Panc1 (cell line): ENCODE measurements at regions of chr14 and their contacts with region 1.

Region 1: GRCh38 chr14:51293149-51293911 is 53.3 kb downstream of the TMX1 start:
- DNase-seq: no peak
- ATAC-seq: no peak
- H3K4me3 ChIP-seq: no peak overlapping the region
- H3K27ac ChIP-seq: no peak overlapping the region
- H3K4me1 ChIP-seq: no peaks in the 10 kb centered on the region
- H3K27me3 ChIP-seq: no peaks in the 10 kb centered on the region
- CTCF ChIP-seq: no peak

Region 2: GRCh38 chr14:51147183-51147582 is 146.1 kb before region 1 on chr14:
- CTCF ChIA-PET with region 1: no interaction called
- POLR2A ChIA-PET with region 1: no interaction called
- in situ Hi-C with region 1: no loop called
- intact Hi-C with region 1: no loop called
- DNase-seq: no peak
- ATAC-seq: no peak
- H3K4me3 ChIP-seq: no peak overlapping the region
- H3K27ac ChIP-seq: no peak overlapping the region
- H3K4me1 ChIP-seq: no peaks in the 10 kb centered on the region
- H3K27me3 ChIP-seq: no peaks in the 10 kb centered on the region
- CTCF ChIP-seq: no peak

Region 3: DNA sequence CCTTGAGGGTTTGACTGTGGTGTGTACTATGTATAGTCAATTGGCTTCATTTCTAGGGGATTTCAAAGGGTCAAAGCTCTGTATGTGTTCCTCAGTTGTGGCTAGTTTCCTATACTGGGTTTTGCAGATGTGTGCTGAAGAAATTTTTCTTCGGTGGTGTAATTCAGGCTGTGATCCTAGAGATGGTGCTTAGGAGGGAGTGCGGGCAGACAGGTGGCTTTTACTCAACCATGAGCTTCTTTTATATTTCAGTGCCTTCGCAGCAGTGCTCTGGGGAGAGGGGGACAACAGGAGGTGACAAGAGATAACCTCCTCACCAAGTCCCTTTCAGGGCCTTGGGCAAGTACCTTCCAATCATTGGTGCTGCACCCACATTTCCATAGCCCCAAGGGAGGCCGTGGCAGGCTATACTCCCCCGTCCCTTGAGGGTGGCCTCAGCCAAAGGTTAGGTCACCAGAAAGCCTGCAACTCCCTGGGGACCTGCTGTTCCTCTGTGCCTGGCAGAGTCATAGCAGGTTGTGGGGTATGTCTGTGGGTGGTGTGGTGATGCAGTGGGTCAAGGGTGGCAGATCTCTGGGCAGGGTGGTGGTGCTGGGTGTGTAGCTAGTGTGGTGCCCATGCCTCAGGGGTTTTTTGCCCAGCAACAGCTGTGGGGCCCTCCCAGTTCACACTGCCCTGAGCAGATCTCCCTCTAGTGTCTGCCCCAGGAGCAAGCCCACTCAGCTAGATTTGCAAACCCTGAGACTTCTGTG is 90.2 kb before region 1 on chr14:
- CTCF ChIA-PET with region 1: no interaction called
- POLR2A ChIA-PET with region 1: no interaction called
- in situ Hi-C with region 1: no loop called
- intact Hi-C with region 1: no loop called
- DNase-seq: no peak
- ATAC-seq: no peak
- H3K4me3 ChIP-seq: no peak overlapping the region
- H3K27ac ChIP-seq: no peak overlapping the region
- H3K4me1 ChIP-seq: no peaks in the 10 kb centered on the region
- H3K27me3 ChIP-seq: peaks cover 2% of the 10 kb centered on the region; the same call in 1 of the 2 replicates
- CTCF ChIP-seq: no peak

Region 4: DNA sequence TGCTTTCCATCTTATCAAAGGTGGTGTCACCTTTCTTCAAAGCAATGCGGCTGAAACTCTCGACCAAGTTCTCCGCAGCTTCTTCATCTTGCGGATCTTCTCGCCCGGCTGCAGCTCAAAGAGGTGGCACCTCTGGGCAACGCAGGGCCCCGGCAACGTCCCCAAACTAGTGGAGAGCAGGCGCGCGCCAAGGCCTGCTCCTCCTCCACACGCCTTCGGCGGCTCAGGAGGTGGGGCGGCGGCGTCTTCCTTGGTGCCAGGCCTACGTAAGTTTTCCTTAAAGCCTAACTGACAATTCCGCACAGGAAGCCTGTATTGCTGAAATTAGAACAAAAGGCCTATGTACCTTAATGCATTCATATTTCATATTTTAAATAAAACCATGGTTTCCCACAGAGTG is 58.7 kb after region 1 on chr14:
- CTCF ChIA-PET with region 1: no interaction called
- POLR2A ChIA-PET with region 1: no interaction called
- in situ Hi-C with region 1: no loop called
- intact Hi-C with region 1: no loop called
- DNase-seq: no peak
- ATAC-seq: no peak
- H3K4me3 ChIP-seq: no peak overlapping the region
- H3K27ac ChIP-seq: no peak overlapping the region
- H3K4me1 ChIP-seq: no peaks in the 10 kb centered on the region
- H3K27me3 ChIP-seq: no peaks in the 10 kb centered on the region
- CTCF ChIP-seq: no peak

Region 5: DNA sequence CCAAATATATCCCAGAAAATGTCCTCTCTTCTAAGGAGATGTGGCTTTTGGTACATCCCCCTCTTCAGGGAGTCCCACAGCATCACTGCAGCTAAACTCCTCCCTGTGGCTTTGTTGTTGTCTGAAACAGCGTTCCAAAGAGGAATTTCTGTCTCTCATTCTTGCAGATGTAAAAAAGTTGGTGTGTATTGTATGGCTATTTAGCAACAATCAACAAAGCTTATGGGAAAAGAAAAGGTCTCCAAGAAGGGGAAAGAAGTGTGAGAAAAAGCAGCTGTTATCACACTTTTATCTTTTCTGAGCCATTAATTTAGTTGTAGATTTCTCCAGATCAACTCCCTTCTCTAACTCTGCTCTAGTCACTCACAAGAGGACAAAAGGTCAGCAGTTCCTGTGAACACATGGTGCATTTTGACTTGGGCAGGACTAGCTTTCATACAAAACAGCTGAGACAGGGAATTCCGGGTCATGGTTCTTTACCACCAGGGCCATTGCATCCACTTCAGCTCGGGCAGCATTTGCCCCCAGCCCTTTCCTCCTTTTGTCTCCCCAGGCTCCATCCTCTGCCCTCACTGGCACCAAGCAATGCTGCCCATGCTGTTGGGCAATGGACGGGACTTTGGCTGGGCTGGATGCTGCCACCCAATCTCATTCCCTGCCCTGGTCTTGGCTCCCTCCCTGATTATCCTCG is 131.4 kb after region 1 on chr14:
- CTCF ChIA-PET with region 1: no interaction called
- POLR2A ChIA-PET with region 1: no interaction called
- in situ Hi-C with region 1: no loop called
- intact Hi-C with region 1: no loop called
- DNase-seq: no peak
- ATAC-seq: no peak
- H3K4me3 ChIP-seq: no peak overlapping the region
- H3K27ac ChIP-seq: no peak overlapping the region
- H3K4me1 ChIP-seq: no peaks in the 10 kb centered on the region
- H3K27me3 ChIP-seq: no peaks in the 10 kb centered on the region
- CTCF ChIP-seq: no peak

Region 6: DNA sequence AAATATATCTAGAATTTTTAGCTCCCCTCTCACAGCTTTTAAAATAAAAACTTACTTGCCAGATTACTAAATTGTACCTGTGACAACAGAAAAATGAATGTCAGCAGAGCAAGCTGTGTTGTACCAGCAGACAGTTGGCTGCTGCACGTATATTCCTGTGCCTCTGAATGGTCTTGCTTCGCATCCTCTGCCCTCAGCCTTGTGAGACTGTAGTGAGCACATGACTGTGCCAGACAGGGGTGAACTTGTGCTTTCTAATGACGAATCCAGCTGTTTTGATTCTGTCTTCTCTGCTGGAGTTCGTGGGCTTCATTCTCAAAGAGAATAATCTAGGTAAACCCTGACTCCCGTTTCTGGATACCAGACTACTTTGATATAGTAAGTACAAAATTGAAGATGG is 300.1 kb after region 1 on chr14:
- CTCF ChIA-PET with region 1: no interaction called
- POLR2A ChIA-PET with region 1: interaction called, 14 read pairs
- in situ Hi-C with region 1: no loop called
- intact Hi-C with region 1: no loop called
- DNase-seq: no peak
- ATAC-seq: peak; percentile 76; the same call in 1 of the 2 replicates
- H3K4me3 ChIP-seq: no peak overlapping the region
- H3K27ac ChIP-seq: no peak overlapping the region; the same call in 1 of the 2 replicates
- H3K4me1 ChIP-seq: no peaks in the 10 kb centered on the region
- H3K27me3 ChIP-seq: no peaks in the 10 kb centered on the region
- CTCF ChIP-seq: no peak